Naive thymus-derived CD4-positive, alpha-beta T cell (primary cell): ENCODE measurements at regions of chr5 and their contacts with region 1.

Region 1: DNA sequence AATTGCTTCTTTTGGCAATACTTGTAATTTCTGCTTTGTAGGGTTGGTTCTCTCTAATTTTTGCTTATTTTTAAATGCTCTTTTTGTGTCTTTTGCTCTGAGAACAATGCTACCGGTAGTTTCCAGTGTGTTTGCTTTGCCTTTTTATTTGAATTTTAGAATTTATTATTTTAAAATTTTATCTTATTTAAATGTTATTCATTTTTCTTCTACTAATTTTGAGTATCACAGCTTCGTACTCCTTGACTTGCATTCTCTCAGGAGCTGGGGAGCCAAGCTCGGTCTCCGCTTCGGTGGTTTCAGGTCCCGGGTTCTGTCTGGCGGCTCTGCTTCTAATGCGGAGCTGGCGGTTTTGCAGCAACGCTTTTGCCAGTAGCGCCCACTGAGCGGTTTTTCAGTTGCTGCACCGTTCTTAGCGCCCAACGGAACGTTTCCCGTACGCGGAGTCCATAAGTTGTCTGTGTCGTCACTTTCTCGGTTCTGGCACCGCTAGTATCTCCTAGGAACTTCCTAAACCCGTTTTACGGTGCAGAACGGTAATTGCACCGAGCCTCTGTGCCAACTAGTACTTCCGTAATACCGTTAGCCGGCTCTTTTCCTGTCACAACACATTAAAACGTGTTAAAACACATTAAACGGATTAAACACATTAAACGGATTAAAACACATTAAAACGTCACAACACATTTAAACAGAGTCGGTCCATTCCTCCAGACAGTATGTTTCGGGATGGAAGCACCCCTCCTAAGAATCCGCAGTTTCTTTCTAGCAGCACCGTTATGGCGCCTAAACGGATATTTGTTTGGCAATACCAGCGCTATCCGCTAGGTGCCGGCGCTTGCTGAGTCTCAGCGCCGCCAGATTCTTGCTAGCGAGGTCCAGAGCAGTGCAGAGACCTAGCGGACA is 45.6 kb downstream of the ANXA2R start:
- DNase-seq: peak; percentile 73 to 89 (median 85)
- ATAC-seq: peak; percentile 73
- H3K4me3 ChIP-seq: peak overlapping the region; percentile 84
- H3K4me3 Mint-ChIP-seq: peak overlapping the region; percentile 84 to 100 (median 98)
- H3K27ac ChIP-seq: peak overlapping the region; percentile 89
- H3K27ac Mint-ChIP-seq: peak overlapping the region; percentile 97 to 100 (median 100)
- H3K4me1 ChIP-seq: peaks cover 18 to 21% of the 10 kb centered on the region in 2 donors
- H3K4me1 Mint-ChIP-seq: peaks cover 16 to 49% (median 29%) of the 10 kb centered on the region in 7 donors
- H3K27me3 ChIP-seq: no peaks in the 10 kb centered on the region
- H3K27me3 Mint-ChIP-seq: peaks cover 0 to under 1% (median 0%) of the 10 kb centered on the region in 5 donors

Region 2: DNA sequence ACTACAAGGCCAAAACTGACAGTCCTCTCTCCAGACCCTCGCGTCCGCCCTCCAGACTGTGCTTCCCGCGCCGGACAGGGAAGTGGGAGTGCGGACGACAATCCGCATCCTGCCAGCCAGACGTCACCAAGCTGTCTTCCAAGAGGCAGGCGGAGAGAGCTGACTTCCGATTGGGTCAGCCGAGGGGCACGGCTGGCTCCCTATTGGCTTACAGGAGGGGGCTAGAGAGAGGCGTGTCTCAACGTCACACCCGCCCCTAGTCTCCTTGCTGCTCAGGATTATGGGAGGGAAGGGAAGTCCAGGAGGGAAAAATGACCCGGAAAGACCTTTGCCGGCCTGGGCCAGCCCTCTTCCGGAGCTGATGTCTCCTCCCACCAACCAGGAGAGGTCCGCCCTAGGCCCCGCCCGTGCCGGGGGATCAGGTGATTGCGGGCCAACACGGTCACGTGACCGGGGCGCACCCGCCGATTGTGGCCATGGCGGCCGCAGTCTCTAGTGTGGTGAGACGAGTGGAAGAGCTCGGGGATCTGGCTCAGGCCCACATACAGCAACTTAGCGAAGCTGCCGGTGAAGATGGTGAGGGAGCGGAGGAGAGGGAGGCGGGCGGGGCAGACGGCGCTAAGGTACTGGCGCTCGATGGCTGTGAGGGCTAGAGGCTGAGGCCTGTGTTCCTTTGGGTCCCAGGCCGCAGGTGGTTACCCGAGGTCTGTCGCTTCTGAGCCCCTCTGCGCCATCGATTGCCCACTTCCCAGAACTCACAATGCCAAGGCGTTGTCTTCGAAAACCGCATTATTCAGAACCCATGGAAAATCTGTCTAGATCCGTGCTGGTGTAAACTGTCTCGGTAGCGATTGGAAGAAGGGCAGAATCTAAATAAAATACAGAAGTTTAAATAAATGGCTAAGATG is 1090.4 kb before region 1 on chr5 and contains the start of gene RIMOC1:
- CTCF ChIA-PET with region 1: no interaction called
- POLR2A ChIA-PET with region 1: interaction called, 5 read pairs
- intact Hi-C with region 1: loop called (anchors 1 kb)
- DNase-seq: peak; percentile 94 to 98 (median 97)
- ATAC-seq: peak; percentile 94
- H3K4me3 ChIP-seq: peak within 1 kb of the TSS; percentile 90
- H3K4me3 Mint-ChIP-seq: peak within 1 kb of the TSS; percentile 84 to 99 (median 98)
- H3K27ac ChIP-seq: peak within 1 kb of the TSS; percentile 85
- H3K27ac Mint-ChIP-seq: peak within 1 kb of the TSS; percentile 97 to 100 (median 99)
- H3K4me1 ChIP-seq: peaks cover 16 to 18% of the 10 kb centered on the region in 2 donors
- H3K4me1 Mint-ChIP-seq: peaks cover 21 to 54% (median 46%) of the 10 kb centered on the region in 7 donors
- H3K27me3 ChIP-seq: no peaks in the 10 kb centered on the region
- H3K27me3 Mint-ChIP-seq: peaks cover 0 to 11% (median 0%) of the 10 kb centered on the region in 5 donors
- total RNA-seq, gene RIMOC1: 13.8 to 40.6 (median 27.5) TPM

Region 3: GRCh38 chr5:42636425-42636824 is 358.1 kb before region 1 on chr5:
- CTCF ChIA-PET with region 1: no interaction called
- POLR2A ChIA-PET with region 1: no interaction called
- intact Hi-C with region 1: no loop called
- DNase-seq: no peak
- ATAC-seq: no peak
- H3K4me3 ChIP-seq: no peak overlapping the region
- H3K4me3 Mint-ChIP-seq: no peak overlapping the region
- H3K27ac ChIP-seq: no peak overlapping the region
- H3K27ac Mint-ChIP-seq: no peak overlapping the region
- H3K4me1 ChIP-seq: no peaks in the 10 kb centered on the region
- H3K4me1 Mint-ChIP-seq: no peaks in the 10 kb centered on the region
- H3K27me3 ChIP-seq: no peaks in the 10 kb centered on the region
- H3K27me3 Mint-ChIP-seq: peaks cover 4 to 32% (median 11%) of the 10 kb centered on the region in 5 donors

Region 4: GRCh38 chr5:42965934-42966333 is 28.6 kb before region 1 on chr5:
- CTCF ChIA-PET with region 1: no interaction called
- POLR2A ChIA-PET with region 1: interaction called, 17 read pairs
- intact Hi-C with region 1: no loop called
- DNase-seq: no peak
- ATAC-seq: no peak
- H3K4me3 ChIP-seq: no peak overlapping the region
- H3K4me3 Mint-ChIP-seq: no peak overlapping the region
- H3K27ac ChIP-seq: no peak overlapping the region
- H3K27ac Mint-ChIP-seq: no peak overlapping the region
- H3K4me1 ChIP-seq: peaks cover 0 to 16% of the 10 kb centered on the region in 2 donors
- H3K4me1 Mint-ChIP-seq: peaks cover 0 to 24% (median 9%) of the 10 kb centered on the region in 7 donors
- H3K27me3 ChIP-seq: no peaks in the 10 kb centered on the region
- H3K27me3 Mint-ChIP-seq: peaks cover 0 to 1% (median 0%) of the 10 kb centered on the region in 5 donors

Region 5: DNA sequence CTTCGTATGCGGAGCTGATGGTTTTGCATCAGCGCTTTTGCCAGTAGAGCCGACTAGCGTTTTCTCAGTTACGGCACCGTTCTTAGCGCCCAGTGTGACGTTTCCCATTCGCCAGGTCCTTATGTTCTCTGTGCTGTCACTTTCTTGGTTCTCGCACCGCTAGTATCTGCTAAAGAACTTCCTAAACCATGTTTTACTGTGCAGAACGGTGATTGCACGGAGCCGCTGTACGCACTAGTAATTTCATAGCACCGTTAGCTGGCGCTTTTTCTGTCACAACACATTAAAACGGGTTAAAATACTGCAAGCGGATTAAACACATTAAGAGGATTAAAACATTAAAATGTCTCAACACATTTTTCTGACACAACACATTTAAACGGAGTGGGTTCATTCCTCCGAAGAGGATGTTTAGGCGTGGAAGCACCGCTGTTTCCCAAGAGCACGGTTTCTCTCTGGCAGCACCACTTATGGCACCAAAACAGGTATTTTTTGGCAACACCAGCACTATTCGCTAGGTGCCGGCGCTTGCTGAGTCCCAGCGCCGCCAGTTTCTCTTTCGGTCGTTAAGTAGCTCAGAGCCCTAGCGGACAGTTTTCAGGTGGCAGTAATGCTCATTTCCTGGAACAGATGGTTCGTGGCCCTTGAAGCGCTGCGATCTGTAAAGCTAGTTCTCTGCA is 25.3 kb after region 1 on chr5:
- CTCF ChIA-PET with region 1: interaction called, 96 read pairs
- POLR2A ChIA-PET with region 1: interaction called, 1,009 read pairs
- intact Hi-C with region 1: loop called (anchors 1 kb)
- DNase-seq: peak; percentile 63 to 94 (median 88)
- ATAC-seq: peak; percentile 77
- H3K4me3 ChIP-seq: peak overlapping the region; percentile 76
- H3K4me3 Mint-ChIP-seq: peak overlapping the region; percentile 92 to 99 (median 98)
- H3K27ac ChIP-seq: peak overlapping the region; percentile 96
- H3K27ac Mint-ChIP-seq: peak overlapping the region; percentile 96 to 100 (median 99)
- H3K4me1 ChIP-seq: peaks cover 34 to 35% of the 10 kb centered on the region in 2 donors
- H3K4me1 Mint-ChIP-seq: peaks cover 20 to 52% (median 46%) of the 10 kb centered on the region in 7 donors
- H3K27me3 ChIP-seq: no peaks in the 10 kb centered on the region
- H3K27me3 Mint-ChIP-seq: no peaks in the 10 kb centered on the region

Region 6: GRCh38 chr5:43061352-43062075 is 67.0 kb after region 1 on chr5:
- CTCF ChIA-PET with region 1: interaction called, 28 read pairs
- POLR2A ChIA-PET with region 1: interaction called, 345 read pairs
- intact Hi-C with region 1: loop called (anchors 1 kb)
- DNase-seq: no peak
- ATAC-seq: no peak
- H3K4me3 ChIP-seq: no peak overlapping the region
- H3K4me3 Mint-ChIP-seq: no peak overlapping the region
- H3K27ac ChIP-seq: no peak overlapping the region
- H3K27ac Mint-ChIP-seq: peak overlapping the region in 8 of 9 donors; percentile 0 to 85 (median 68)
- H3K4me1 ChIP-seq: peaks cover 0 to 8% of the 10 kb centered on the region in 2 donors
- H3K4me1 Mint-ChIP-seq: peaks cover 0 to 29% (median 14%) of the 10 kb centered on the region in 7 donors
- H3K27me3 ChIP-seq: no peaks in the 10 kb centered on the region
- H3K27me3 Mint-ChIP-seq: no peaks in the 10 kb centered on the region

Region 7: GRCh38 chr5:43110606-43111442 is 116.3 kb after region 1 on chr5:
- CTCF ChIA-PET with region 1: interaction called, 5 read pairs
- POLR2A ChIA-PET with region 1: interaction called, 19 read pairs
- intact Hi-C with region 1: no loop called
- DNase-seq: peak in 7 of 9 donors; percentile 44 to 59 (median 51)
- ATAC-seq: peak; percentile 87
- H3K4me3 ChIP-seq: no peak overlapping the region
- H3K4me3 Mint-ChIP-seq: peak overlapping the region; percentile 37 to 86 (median 60)
- H3K27ac ChIP-seq: peak overlapping the region; percentile 54
- H3K27ac Mint-ChIP-seq: peak overlapping the region; percentile 66 to 97 (median 89)
- H3K4me1 ChIP-seq: peaks cover 0 to 28% of the 10 kb centered on the region in 2 donors
- H3K4me1 Mint-ChIP-seq: peaks cover 13 to 35% (median 28%) of the 10 kb centered on the region in 7 donors
- H3K27me3 ChIP-seq: no peaks in the 10 kb centered on the region
- H3K27me3 Mint-ChIP-seq: no peaks in the 10 kb centered on the region

Region 8: GRCh38 chr5:43179836-43180235 is 185.3 kb after region 1 on chr5:
- CTCF ChIA-PET with region 1: no interaction called
- POLR2A ChIA-PET with region 1: no interaction called
- intact Hi-C with region 1: no loop called
- DNase-seq: no peak
- ATAC-seq: no peak
- H3K4me3 ChIP-seq: no peak overlapping the region
- H3K4me3 Mint-ChIP-seq: no peak overlapping the region
- H3K27ac ChIP-seq: no peak overlapping the region
- H3K27ac Mint-ChIP-seq: no peak overlapping the region
- H3K4me1 ChIP-seq: no peaks in the 10 kb centered on the region
- H3K4me1 Mint-ChIP-seq: peaks cover 0 to 4% (median 0%) of the 10 kb centered on the region in 7 donors
- H3K27me3 ChIP-seq: no peaks in the 10 kb centered on the region
- H3K27me3 Mint-ChIP-seq: no peaks in the 10 kb centered on the region

Region 9: DNA sequence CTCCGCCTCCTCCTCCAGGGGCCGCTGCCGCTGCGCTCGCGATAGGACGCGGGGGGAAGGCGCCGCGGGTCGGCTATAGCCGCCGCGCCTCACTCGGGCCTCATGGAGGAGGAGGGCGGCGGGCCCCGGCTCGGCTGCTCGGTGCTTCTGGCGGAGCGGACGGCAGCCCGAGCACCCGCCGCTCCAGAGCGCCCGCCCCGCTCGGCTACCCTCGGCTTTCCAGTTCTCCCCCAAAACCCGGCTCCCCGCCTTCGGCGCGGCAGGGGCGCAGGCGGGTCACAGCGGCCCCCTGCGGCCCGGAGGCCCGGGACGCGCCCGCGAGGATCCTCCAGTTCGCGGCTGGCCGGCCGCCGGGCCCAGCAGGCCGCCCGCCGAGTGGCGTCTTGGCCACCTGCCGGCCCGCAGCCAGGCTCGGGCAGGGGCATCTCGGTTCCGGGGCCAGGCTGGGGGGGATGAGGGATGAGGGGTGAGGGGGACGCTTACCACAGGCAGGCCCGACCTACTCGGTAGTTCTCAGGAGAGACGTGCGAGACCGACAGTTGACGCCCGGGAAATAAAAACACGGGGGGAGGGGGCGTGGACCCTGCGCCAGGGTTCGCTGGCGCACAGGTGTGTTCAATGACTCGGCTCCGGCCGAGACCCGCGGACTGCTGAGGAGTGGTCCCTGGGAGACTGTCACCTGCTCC is 562.5 kb after region 1 on chr5 and contains the start of gene PAIP1:
- CTCF ChIA-PET with region 1: no interaction called
- POLR2A ChIA-PET with region 1: interaction called, 3 read pairs
- intact Hi-C with region 1: loop called in 1 of 2 experiments (anchors 2 kb)
- DNase-seq: peak; percentile 80 to 89 (median 87)
- ATAC-seq: peak; percentile 89
- H3K4me3 ChIP-seq: peak within 1 kb of the TSS; percentile 79
- H3K4me3 Mint-ChIP-seq: peak within 1 kb of the TSS in 7 of 10 donors; percentile 88 to 97 (median 95)
- H3K27ac ChIP-seq: peak within 1 kb of the TSS; percentile 96
- H3K27ac Mint-ChIP-seq: peak within 1 kb of the TSS; percentile 91 to 99 (median 98)
- H3K4me1 ChIP-seq: peaks cover 17 to 30% of the 10 kb centered on the region in 2 donors
- H3K4me1 Mint-ChIP-seq: peaks cover 6 to 17% (median 7%) of the 10 kb centered on the region in 7 donors
- H3K27me3 ChIP-seq: no peaks in the 10 kb centered on the region
- H3K27me3 Mint-ChIP-seq: peaks cover 0 to 18% (median 5%) of the 10 kb centered on the region in 5 donors
- total RNA-seq, gene PAIP1: 20.7 to 41.7 (median 39.2) TPM